Esophagus muscularis mucosa (tissue), 4 donors: ENCODE measurements at regions of chr18 and their contacts with region 1.

Region 1: GRCh38 chr18:34707670-34708069 is 2.4 kb upstream of the DTNA start:
- DNase-seq: no peak
- H3K4me3 ChIP-seq: peak overlapping the region in 3 of 4 donors; percentile 9 to 11 (median 10)
- H3K27ac ChIP-seq: peak overlapping the region; percentile 81 to 84 (median 82)
- H3K4me1 ChIP-seq: peaks cover 34 to 59% (median 54%) of the 10 kb centered on the region in 4 donors
- H3K27me3 ChIP-seq: no peaks in the 10 kb centered on the region
- CTCF ChIP-seq: no peak
- EP300 ChIP-seq: no peak
- POLR2A ChIP-seq: no peak

Region 2: DNA sequence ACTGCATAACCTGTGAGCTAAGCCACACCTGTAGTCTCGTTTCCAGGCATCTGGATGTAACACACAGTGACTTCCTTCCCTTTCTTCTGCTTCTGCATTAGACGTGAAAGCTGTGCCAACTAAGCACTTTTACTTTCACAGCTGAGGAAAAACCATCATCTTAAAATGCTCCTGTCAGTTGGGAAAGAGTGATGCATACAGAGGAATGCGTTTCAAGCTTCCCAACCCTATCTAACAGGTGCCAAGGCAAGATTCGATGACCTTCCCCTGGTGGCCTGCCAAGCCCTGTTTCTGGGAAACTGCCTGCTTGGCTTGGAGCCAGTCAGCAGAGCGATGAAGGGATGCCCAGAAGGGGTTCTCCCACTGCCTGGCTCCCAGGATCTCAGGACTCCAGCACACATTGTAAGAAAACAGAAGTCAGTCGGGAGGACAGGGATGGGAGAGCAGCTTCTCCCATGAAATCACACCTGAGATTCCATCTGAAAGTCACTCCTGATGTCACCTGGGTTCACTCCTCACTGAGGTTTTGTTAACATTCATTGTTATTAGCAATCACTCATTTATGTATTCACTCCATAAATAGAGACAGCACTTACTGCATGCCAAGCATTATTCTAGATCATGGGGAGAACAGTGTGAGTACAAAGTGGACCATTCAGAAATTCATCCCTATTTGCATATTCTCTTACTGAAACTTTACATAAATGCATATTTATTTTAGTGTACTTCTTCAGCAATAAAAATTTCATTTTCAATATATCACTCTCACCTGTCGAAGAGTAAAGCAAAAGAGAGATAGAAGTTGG is 66.5 kb after region 1 on chr18:
- intact Hi-C with region 1: loop called (anchors 5 kb)
- DNase-seq: no peak
- H3K4me3 ChIP-seq: peak overlapping the region in 3 of 4 donors; percentile 1 to 30 (median 6)
- H3K27ac ChIP-seq: peak overlapping the region; percentile 59 to 76 (median 68)
- H3K4me1 ChIP-seq: peaks cover 22 to 34% (median 24%) of the 10 kb centered on the region in 4 donors
- H3K27me3 ChIP-seq: no peaks in the 10 kb centered on the region
- CTCF ChIP-seq: no peak
- EP300 ChIP-seq: no peak
- POLR2A ChIP-seq: no peak